Posterior vena cava (tissue), 2 donors: ENCODE measurements at regions of chr9 and their contacts with region 1.

Region 1: DNA sequence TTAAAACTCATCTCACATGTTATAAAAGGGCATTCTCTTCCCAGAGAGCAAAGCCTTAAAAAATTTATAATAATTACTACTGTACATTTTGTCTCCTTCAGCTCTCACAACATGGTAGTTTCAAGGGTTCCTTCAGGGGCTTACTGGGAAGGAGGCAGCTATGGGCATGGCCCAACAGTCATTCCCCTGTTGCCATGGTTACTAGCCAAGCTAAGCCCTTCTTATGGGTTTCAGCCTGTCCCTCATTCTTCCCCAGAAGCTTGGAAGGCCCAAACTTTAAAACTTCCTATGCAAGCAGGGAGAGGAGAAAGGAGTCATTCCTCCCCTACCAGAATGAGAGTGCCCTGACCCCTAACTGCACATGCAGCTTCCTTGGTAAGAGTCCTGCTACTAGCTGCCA is 82.2 kb upstream of the CNTLN start:
- DNase-seq: no peak

Region 2: GRCh38 chr9:16726718-16727451 is 325.7 kb before region 1 on chr9:
- intact Hi-C with region 1: no loop called
- DNase-seq: peak; percentile 96

Region 3: GRCh38 chr9:17005056-17005823 is 47.4 kb before region 1 on chr9:
- intact Hi-C with region 1: loop called in 1 of 2 experiments (anchors 2 kb)
- DNase-seq: no peak

Region 4: DNA sequence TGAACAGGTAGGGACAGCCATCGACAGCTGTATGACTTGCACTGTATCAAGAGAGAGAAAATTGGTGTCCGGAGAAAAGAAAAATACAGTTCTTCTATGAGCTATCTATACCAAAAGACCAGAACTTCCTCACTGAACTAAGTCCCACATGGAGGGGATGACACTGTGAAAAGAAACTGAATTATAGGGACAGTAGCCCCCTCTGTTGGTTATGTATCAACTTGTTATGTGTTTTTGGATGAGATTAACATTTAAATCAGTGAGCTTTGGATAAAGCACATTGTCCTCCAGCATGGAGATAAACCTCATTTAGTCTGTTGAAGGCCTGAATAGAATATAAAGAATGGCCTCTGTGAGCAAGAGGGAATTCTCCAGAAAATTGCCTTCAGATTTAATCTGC is 349.7 kb after region 1 on chr9:
- intact Hi-C with region 1: no loop called
- DNase-seq: no peak